OCI-LY7 (cell line): ENCODE measurements at regions of chr1 and their contacts with region 1.

Region 1: DNA sequence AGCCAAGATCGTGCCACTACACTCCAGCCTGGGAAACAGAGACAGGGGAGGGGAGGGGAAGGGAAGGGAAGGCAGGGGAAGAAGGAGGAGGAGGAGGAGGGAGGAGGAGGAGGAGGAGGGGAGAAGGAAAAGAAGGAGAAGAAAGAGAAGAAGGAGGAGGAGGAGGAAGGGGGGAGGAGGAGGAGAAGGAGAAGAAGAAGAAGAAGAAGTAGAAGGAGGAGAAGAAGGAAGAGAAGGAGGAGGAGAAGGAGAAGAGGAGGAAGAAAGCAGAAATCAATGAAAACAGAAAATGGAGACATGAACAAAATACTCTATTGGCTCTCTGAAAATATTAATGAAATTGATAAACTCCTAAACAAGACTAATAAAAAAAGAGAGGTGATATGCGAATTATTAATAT is 23.5 kb downstream of the DENND1B start:
- DNase-seq: no peak
- H3K4me3 ChIP-seq: no peak overlapping the region
- H3K27ac ChIP-seq: no peak overlapping the region
- H3K4me1 ChIP-seq: no peaks in the 10 kb centered on the region
- CTCF ChIP-seq: no peak

Region 2: DNA sequence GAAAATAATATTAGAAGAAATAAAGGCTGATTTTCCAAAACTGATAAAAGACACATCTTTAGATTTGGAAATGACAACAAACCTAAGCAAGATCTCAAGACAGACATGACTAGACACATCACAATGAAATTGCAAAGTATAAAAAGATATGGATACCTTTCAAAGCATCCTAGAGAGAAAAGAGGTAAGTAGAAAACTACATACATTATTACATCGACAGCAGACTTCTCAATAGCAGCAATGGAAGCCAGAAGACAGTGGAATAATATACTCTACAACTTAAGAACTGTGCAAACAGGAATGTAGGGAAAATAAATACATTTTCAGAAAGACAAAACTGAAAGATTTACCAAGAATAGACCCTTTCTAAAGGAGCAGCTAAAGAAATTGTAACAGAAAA is 26.7 kb before region 1 on chr1:
- CTCF ChIA-PET with region 1: no interaction called
- POLR2A ChIA-PET with region 1: no interaction called
- intact Hi-C with region 1: loop called (anchors 1 kb)
- DNase-seq: peak; percentile 39
- H3K4me3 ChIP-seq: no peak overlapping the region
- H3K27ac ChIP-seq: no peak overlapping the region
- H3K4me1 ChIP-seq: no peaks in the 10 kb centered on the region
- CTCF ChIP-seq: no peak